Transverse colon (tissue), 4 donors: ENCODE measurements at regions of chr11 and their contacts with region 1.

Region 1: GRCh38 chr11:19071255-19071654 is 10.7 kb upstream of the MRGPRX2 start:
- DNase-seq: peak; percentile 75
- H3K4me3 ChIP-seq: no peak overlapping the region
- H3K27ac ChIP-seq: peak overlapping the region in 1 of 4 donors; percentile 83
- H3K4me1 ChIP-seq: peaks cover 0 to 24% (median 20%) of the 10 kb centered on the region in 4 donors
- H3K27me3 ChIP-seq: peaks cover 13% of the 10 kb centered on the region
- CTCF ChIP-seq: peak; percentile 84 to 99 (median 89)
- EP300 ChIP-seq: no peak
- POLR2A ChIP-seq: no peak

Region 2: DNA sequence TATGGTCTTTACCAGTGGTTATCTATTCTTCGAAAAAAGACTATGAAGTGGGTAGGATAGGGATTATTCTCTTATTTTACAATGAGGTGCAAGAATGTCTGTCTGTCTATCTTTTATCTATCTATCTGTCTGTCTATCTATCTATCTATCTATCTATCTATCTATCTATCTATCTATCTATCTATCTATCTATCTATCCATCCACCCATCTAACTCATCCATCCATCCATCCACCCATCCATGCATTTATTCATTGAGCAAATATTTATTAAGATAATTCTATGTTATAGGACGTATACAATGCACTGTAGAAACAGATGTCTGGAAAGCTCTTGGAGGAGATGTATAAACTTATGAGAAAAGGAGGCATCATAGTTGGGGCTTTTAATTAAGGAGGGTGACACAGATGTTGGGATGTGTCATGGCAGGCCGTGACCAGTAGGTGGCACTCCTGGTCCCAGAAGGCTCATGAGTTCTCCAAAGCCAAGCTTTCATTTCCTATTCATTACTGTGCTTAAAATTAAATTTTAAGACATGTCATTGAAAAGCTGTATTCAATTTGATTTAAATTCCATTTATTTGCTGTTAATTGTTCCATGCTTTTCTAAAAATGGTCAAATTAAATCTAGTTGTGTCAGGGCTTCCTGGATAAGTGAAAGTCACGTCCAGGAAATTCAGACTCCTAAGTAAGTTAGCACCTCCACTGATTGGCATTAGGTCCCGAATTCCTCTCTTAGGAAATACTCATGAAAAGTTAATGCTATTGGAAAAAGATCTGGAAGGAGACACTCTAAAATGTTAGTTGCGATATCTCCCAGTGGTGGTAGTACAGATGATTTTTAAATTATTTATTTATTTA is 188.5 kb after region 1 on chr11:
- in situ Hi-C with region 1: loop called in 1 of 4 experiments (anchors 10 kb)
- intact Hi-C with region 1: no loop called
- DNase-seq: peak; percentile 75
- H3K4me3 ChIP-seq: peak overlapping the region in 1 of 4 donors; percentile 19
- H3K27ac ChIP-seq: no peak overlapping the region
- H3K4me1 ChIP-seq: peaks cover 0 to 4% (median 0%) of the 10 kb centered on the region in 4 donors
- H3K27me3 ChIP-seq: no peaks in the 10 kb centered on the region
- CTCF ChIP-seq: peak; percentile 87 to 96 (median 92)
- EP300 ChIP-seq: no peak
- POLR2A ChIP-seq: no peak

Region 3: GRCh38 chr11:19525276-19526113 is 454.2 kb after region 1 on chr11:
- in situ Hi-C with region 1: loop called in 2 of 4 experiments (anchors 25 kb)
- intact Hi-C with region 1: no loop called
- DNase-seq: no peak
- H3K4me3 ChIP-seq: no peak overlapping the region
- H3K27ac ChIP-seq: no peak overlapping the region
- H3K4me1 ChIP-seq: peaks cover 0 to 4% (median 0%) of the 10 kb centered on the region in 4 donors
- H3K27me3 ChIP-seq: no peaks in the 10 kb centered on the region
- CTCF ChIP-seq: no peak
- EP300 ChIP-seq: no peak
- POLR2A ChIP-seq: no peak

Region 4: GRCh38 chr11:19769820-19770219 is 698.6 kb after region 1 on chr11:
- in situ Hi-C with region 1: loop called in 1 of 4 experiments (anchors 25 kb)
- intact Hi-C with region 1: no loop called
- DNase-seq: no peak
- H3K4me3 ChIP-seq: no peak overlapping the region
- H3K27ac ChIP-seq: no peak overlapping the region
- H3K4me1 ChIP-seq: peaks cover 0 to 7% (median 0%) of the 10 kb centered on the region in 4 donors
- H3K27me3 ChIP-seq: no peaks in the 10 kb centered on the region
- CTCF ChIP-seq: no peak
- EP300 ChIP-seq: no peak
- POLR2A ChIP-seq: no peak